ENCODE measurements at regions of chr1 and their contacts with region 1.

Region 1: DNA sequence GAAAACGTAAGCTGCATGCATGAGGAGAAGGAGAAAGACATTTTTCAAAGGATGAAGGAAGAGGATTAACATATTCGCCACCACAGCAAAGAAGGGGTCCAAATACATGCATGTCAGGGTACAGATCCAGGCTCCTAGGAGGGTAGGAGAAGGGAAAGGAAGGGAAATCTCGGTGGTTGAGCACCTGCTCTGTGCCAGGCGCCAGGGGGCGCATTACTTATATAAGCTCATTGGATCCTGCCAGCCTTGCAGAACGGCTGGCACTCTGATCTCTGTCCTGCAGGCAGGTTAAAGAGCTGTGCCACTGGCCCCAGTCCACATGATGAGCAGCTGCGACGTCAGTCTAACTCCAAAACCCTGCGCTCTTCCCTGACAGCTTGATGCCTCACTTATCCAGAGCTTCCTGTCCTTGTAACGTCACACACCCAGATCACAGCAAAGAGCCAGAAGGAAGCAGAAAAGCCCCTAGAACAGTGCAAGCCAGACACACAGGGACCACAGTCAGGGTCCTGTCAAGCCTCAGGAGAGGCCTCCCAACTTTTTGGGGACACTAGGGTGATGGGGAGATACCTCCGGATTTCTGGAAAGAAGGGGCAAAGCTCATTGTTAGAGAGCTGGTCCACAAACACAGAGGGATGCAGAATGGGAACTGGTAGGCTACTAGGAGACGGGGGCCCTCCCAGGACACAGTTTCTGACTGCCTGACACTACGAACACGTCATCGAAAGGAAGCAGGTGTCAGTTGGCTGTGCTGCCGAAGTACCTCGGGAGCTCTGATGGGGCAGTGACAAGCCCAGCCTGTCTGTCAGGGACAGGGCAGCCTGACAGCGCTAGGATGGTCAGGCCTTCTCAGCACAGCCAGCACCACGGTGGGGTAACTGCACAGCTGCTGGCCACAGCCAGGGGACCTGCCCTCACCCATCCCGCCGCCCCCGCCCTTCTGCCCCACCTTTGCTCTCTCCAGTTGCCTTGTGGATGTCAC is 99.1 kb downstream of the BEND5 start:
- DNase-seq: peak; percentile 50
- H3K4me3 Mint-ChIP-seq: no peak overlapping the region
- H3K27ac Mint-ChIP-seq: no peak overlapping the region
- H3K4me1 Mint-ChIP-seq: no peaks in the 10 kb centered on the region
- H3K27me3 Mint-ChIP-seq: peaks cover 8% of the 10 kb centered on the region

Region 2: GRCh38 chr1:48688102-48688760 is 10.6 kb after region 1 on chr1:
- CTCF ChIA-PET with region 1: interaction called, 14 read pairs
- DNase-seq: no peak
- H3K4me3 Mint-ChIP-seq: no peak overlapping the region
- H3K27ac Mint-ChIP-seq: no peak overlapping the region
- H3K4me1 Mint-ChIP-seq: no peaks in the 10 kb centered on the region
- H3K27me3 Mint-ChIP-seq: no peaks in the 10 kb centered on the region

Region 3: DNA sequence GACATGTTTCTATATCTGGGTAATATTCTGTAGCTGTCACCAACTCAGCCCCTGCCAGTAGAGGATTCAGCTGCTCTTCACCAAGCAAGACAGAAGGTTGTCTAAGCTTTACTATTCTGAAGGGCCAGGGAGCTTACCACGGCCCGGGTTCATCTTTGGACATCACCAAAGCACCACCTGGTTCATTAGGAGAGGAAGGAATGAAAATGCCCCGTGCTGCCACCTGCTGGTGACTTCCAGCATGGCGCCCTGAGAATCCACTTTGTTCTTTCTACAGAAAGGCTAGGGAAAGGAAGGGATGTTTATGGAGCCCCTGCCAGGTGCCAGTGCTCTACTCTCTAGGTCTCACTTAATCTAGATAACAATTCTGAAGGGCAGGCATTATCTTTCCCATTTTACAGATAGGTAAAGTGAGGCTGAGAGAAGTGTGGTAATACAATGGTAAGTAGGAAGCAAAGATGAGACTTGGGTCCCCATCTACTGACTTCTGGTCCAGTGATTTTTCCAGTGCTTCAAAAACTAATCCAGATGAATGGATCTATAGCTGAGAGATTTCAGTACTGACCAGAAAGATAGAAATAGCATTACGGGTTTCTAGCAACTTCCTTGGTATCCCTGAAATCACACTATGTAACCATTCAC is 19.6 kb after region 1 on chr1:
- CTCF ChIA-PET with region 1: interaction called, 38 read pairs
- DNase-seq: peak; percentile 69
- H3K4me3 Mint-ChIP-seq: no peak overlapping the region
- H3K27ac Mint-ChIP-seq: no peak overlapping the region
- H3K4me1 Mint-ChIP-seq: no peaks in the 10 kb centered on the region
- H3K27me3 Mint-ChIP-seq: peaks cover 21% of the 10 kb centered on the region

Region 4: DNA sequence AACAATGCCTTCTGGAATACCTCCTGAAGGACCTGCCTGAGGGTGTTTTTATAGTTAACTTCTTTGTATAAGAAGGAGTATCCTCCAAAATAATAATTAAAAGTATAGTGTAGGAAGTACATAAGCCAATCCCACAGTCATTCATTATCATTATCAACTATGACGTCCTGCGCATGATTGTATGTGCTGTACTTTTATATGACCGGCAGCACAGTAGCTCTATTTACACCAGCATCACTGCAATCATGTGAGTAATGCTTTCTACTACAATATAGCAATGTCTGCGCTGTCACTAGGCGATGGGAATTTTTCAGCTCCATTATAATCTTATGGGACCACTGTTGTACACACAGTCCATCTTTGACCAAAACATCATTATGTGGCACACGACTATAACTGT is 27.1 kb after region 1 on chr1:
- CTCF ChIA-PET with region 1: interaction called, 11 read pairs
- DNase-seq: no peak
- H3K4me3 Mint-ChIP-seq: no peak overlapping the region
- H3K27ac Mint-ChIP-seq: no peak overlapping the region
- H3K4me1 Mint-ChIP-seq: no peaks in the 10 kb centered on the region
- H3K27me3 Mint-ChIP-seq: peaks cover 15% of the 10 kb centered on the region

Region 5: DNA sequence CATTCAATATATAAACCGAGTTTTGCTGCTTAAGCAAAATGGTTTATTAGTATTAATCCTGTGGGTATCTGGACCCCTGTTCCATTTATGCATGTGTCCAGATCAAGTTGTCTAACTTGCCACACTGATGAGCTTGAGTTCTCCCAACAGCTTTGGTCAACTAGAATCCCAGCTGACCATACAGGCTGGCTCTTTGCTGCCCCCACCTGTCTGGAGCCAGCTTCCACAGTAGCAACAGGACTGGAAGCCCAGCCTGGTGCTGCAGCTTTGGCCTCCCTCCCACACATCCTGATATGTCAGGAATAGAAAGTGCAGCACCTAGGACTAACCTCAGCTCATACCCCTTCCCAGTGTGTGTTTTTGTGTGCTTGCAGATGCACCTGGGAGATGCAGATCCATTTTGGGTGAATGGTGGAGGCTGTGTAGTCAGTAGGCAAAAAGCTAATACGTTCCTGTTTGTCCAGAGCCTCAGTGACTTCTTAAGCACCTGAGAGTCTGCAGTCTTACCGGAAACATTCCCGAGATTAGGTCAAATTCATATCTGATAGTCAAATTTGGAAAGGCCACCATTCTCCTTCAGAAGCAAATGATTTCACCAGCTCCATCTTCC is 140.0 kb after region 1 on chr1:
- CTCF ChIA-PET with region 1: interaction called, 79 read pairs
- DNase-seq: peak; percentile 35
- H3K4me3 Mint-ChIP-seq: no peak overlapping the region
- H3K27ac Mint-ChIP-seq: no peak overlapping the region
- H3K4me1 Mint-ChIP-seq: no peaks in the 10 kb centered on the region
- H3K27me3 Mint-ChIP-seq: no peaks in the 10 kb centered on the region

Measured in activated naive CD4-positive, alpha-beta T cell treated with anti-CD3 and anti-CD28 coated beads, Interleukin-2, amount 10 ng/mL, durations not matched to agents 7 days and 5 days (primary cell).